Dorsolateral prefrontal cortex (tissue), 120 donors: ENCODE measurements at regions of chr1 and their contacts with region 1.

Region 1: GRCh38 chr1:167542109-167543032 is 11.2 kb downstream of the CREG1 start:
- DNase-seq: no peak
- H3K4me3 ChIP-seq: no peak overlapping the region
- H3K27ac ChIP-seq: peak overlapping the region in 39 of 59 donors; percentile 2 to 82 (median 35)
- H3K27me3 ChIP-seq: no peaks in the 10 kb centered on the region
- CTCF ChIP-seq: no peak

Region 2: DNA sequence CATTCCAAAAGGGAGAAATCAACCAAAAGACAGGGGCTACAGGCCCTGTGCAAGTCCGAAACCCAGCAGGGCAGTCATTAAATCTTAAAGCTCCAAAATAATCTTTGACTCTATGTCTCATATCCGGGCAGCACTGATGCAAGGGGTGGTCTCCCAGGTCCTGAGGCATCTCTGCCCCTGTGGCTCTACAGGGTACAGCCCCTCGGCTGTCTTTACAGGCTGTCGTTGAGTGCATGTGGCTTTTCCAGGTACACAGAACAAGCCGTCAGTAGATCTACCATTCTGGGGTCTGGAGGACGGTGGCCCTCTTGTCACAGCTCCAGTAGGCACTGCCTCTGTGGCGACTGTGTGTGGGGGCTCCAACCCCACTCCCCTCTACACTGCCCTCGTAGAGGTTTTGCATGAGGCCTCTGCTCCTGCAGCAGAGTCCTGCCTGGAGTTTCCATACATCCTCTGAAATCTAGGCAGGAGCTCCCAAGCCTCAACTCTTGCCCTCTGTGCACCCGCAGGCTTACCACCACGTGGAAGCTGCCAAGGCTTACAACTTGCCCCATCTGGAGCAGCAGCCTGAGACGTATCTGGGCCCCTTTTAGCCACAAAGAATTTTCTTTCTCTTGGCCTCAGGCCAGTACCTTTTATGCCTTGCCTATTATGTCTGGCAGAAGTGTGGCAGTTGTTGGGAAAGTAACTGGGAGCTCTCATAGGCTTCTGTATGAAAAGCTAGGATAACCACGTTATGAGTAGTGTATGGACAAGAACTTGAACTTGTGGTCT is 269.2 kb before region 1 on chr1:
- intact Hi-C with region 1: loop called in 1 of 2 experiments (anchors 5 kb)
- DNase-seq: no peak
- H3K4me3 ChIP-seq: no peak overlapping the region
- H3K27ac ChIP-seq: peak overlapping the region in 9 of 59 donors; percentile 5 to 44 (median 26)
- H3K27me3 ChIP-seq: no peaks in the 10 kb centered on the region
- CTCF ChIP-seq: no peak